Calu3 (cell line): ENCODE measurements at regions of chr13 and their contacts with region 1.

Region 1: GRCh38 chr13:102913914-102914313 is 68.1 kb downstream of the ERCC5 start:
- DNase-seq: no peak
- H3K4me3 Mint-ChIP-seq: no peak overlapping the region
- H3K27ac Mint-ChIP-seq: no peak overlapping the region
- H3K4me1 Mint-ChIP-seq: peaks cover 12% of the 10 kb centered on the region
- H3K27me3 Mint-ChIP-seq: no peaks in the 10 kb centered on the region
- CTCF ChIP-seq: no peak

Region 2: DNA sequence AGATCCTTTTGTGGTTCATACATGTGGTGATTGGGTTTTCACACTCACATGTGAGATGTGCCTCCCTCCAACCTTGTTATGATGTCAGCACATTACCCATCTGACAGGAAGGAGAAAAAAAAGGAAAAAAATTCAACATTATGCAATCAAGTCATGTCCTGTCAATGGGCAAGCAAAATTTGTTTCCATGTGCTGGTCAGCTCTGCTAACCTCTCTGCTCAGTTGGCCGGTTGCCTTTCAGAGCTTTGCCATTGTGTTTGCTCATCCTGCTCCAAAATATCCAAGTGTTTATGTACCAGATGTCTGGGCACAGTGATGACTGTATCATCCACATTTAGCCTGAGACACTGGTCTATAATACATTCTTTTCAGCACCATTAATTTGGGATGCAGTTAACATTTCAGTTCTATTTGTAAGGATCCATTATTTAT is 192.1 kb before region 1 on chr13:
- CTCF ChIA-PET with region 1: no interaction called
- intact Hi-C with region 1: no loop called
- DNase-seq: no peak
- H3K4me3 Mint-ChIP-seq: no peak overlapping the region
- H3K27ac Mint-ChIP-seq: no peak overlapping the region
- H3K4me1 Mint-ChIP-seq: no peaks in the 10 kb centered on the region
- H3K27me3 Mint-ChIP-seq: no peaks in the 10 kb centered on the region
- CTCF ChIP-seq: no peak

Region 3: DNA sequence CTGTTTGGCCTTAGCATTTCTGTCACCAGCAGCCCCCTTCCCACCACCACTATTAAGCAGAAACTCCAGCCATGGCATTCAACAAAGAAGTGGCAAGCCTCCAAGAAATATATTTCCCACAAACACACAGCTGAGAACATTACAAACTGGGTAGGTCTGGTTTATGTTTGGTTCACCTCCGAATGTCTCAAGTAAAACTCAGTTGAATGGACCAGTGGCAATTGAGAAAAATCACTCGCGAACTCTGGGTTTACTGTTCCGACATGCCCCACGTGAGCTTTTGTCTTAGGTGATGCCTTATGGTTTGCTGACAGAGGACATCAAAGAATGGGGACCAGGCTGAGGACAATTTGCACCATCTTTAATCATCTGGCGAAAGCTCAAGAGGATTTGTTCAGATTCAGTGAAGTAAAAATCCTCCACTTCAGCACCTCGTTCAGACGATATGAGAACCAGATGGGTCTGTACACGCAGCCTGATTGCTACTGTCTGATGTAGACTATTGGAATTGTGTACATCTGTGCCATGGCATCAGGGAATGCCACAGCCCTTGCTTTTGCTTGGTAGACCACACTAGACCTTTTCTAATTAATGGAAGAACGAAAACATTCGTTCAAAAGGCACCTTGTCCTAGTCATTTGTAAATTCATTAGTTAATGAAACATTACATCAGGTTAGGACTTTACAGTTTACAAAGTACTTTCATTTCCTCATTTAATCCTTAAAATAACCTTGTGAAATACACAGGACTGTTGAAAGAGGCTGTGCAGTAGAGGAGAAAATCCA is 92.9 kb after region 1 on chr13:
- CTCF ChIA-PET with region 1: no interaction called
- intact Hi-C with region 1: no loop called
- DNase-seq: no peak
- H3K4me3 Mint-ChIP-seq: no peak overlapping the region
- H3K27ac Mint-ChIP-seq: no peak overlapping the region
- H3K4me1 Mint-ChIP-seq: no peaks in the 10 kb centered on the region
- H3K27me3 Mint-ChIP-seq: no peaks in the 10 kb centered on the region
- CTCF ChIP-seq: no peak

Region 4: DNA sequence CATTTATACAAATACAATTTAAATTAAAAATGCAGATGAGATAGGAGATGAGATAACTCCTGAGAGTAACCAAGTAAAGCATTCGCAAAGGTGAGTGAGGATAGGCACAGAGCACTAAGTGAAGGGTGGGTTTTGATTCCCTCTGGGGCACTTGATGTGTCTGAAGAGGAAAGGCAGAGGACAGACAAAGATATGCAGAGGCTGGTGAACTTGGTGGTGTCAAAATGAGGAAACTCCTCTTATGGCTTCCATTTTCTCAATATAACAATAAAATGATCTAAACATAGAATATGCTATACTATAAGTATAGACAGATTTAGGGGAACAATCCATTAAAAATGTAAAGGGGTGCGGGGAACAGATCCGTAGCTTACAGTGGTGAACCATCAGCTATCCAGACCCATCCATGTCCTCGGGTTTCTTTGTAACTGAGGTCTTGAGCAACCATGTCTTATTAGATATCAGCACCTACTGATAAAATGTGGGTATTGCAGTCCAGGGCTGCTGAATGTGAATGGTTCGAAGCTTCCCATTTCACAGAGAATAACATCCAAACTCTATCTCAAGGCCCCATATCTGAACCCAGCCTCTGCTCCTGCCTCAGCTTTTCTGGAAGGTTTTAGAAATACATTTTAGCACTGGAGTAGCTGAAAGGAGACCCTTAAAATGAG is 226.2 kb after region 1 on chr13:
- CTCF ChIA-PET with region 1: interaction called, 8 read pairs
- intact Hi-C with region 1: loop called (anchors 1 kb)
- DNase-seq: peak; percentile 1
- H3K4me3 Mint-ChIP-seq: no peak overlapping the region
- H3K27ac Mint-ChIP-seq: no peak overlapping the region
- H3K4me1 Mint-ChIP-seq: no peaks in the 10 kb centered on the region
- H3K27me3 Mint-ChIP-seq: no peaks in the 10 kb centered on the region
- CTCF ChIP-seq: no peak

Region 5: DNA sequence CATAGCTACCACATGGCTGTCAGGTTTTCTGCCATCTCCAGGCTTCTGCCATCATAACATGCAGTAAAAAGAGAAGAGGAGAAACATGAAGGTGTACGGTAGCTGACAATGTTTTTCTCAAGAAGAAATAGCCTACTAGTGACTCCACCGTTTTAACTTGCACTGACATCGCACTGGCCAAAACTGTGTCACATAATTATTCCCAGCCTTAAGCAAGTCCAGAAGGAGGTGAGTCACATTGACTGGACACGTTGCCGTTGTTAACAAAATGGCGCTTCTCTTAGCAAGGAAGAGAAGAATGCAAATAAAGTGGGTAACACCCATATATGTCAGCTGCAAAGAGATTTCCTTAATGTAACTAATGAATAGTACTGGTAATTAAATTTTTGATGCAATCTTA is 962.7 kb after region 1 on chr13:
- CTCF ChIA-PET with region 1: no interaction called
- intact Hi-C with region 1: loop called (anchors 10 kb)
- DNase-seq: no peak
- H3K4me3 Mint-ChIP-seq: no peak overlapping the region
- H3K27ac Mint-ChIP-seq: no peak overlapping the region
- H3K4me1 Mint-ChIP-seq: peaks cover 8% of the 10 kb centered on the region
- H3K27me3 Mint-ChIP-seq: no peaks in the 10 kb centered on the region
- CTCF ChIP-seq: no peak